Activated B cell treated with CpG ODN at 0.5 μM for 24 hours (primary cell): ENCODE measurements at regions of chr13 and their contacts with region 1.

Region 1: DNA sequence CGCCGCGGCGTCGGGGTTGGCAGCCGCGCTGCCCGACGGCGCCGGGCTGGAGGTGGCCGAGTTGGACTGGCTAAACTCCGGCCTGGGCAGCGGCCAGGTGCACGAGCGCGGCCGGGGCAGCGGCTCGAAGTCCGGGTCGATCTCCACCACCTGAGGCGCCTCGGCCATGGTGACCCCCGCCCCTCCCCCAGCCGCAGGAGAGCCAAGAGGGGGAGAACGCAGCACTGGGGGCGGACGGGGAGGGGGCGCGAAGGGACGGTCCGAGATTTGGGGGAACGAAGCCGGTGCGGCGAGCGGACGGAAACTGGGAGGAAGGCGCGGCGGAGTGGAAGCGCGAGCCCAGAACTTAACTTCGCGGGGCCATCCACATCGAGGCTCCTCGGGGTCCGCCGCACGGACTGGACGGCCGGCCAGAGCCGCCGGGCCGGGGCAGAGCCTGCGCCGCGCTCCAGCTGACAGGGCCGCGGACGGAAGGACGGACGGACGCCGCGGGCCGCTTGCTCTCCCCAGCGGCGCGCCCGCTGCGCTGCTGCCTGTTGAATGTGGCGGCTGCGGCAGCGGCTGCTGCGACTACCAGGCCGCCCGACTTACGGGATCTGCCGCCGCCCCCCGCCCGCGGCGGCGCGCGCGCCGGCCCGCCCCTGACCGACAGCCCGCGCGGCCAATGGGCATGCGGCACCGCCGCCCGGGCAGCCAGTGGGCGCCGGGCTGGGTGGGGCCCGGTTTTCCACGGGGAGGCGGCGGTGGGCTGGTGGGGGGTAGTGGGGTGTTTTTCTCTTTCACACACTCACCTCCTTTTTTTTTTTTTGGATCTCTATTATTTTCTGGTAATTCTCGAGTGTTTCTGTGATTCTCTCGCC is at the start of gene FOXO1:
- DNase-seq: peak; percentile 94
- ATAC-seq: peak; percentile 69
- H3K4me3 Mint-ChIP-seq: peak within 1 kb of the TSS; percentile 93
- H3K27ac Mint-ChIP-seq: peak within 1 kb of the TSS; percentile 94
- H3K4me1 Mint-ChIP-seq: peaks cover 40% of the 10 kb centered on the region
- H3K27me3 Mint-ChIP-seq: no peaks in the 10 kb centered on the region
- CTCF ChIP-seq: no peak
- total RNA-seq, gene FOXO1: 47.5 and 50.4 TPM in 2 replicates

Region 2: DNA sequence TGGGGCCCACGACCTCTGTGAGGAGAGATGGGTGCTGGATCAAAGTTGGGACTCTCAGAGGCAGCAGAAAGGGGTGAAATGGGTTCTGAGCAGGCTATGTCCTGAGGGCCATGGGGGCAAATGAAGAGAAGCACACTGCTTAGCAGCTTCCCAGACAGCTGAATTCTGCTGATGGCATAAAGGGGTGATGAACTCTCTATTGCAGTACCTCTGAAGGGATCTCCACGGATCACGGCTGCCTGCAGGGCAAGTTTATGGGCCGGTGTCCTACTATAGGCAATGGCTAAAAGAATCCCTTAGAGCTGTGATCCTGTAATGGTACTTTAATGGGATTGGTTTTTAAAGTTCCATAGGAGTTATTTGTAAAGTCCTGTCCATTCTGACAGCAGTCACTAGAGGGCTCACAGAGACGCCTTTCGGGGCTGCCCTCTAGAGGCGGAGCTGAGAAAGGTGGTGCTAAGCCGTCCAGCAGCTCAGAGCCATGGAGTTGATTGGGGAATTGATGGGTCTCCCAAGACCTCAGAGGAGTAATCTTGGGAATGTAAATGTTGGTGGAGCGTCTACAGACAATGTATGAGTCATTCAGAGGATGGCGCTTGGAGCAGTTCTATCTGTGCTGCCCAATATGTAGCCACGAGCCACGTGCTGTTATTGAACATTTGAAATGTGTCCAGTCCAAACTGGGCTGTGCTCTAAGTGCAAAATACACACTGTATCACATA is 723.6 kb before region 1 on chr13:
- CTCF ChIA-PET with region 1: interaction called, 6 read pairs
- POLR2A ChIA-PET with region 1: no interaction called
- intact Hi-C with region 1: loop called (anchors 5 kb)
- DNase-seq: peak; percentile 44
- ATAC-seq: peak; percentile 100
- H3K4me3 Mint-ChIP-seq: no peak overlapping the region
- H3K27ac Mint-ChIP-seq: no peak overlapping the region
- H3K4me1 Mint-ChIP-seq: no peaks in the 10 kb centered on the region
- H3K27me3 Mint-ChIP-seq: peaks cover 1% of the 10 kb centered on the region
- CTCF ChIP-seq: peak; percentile 93

Region 3: GRCh38 chr13:40318366-40318765 is 347.9 kb before region 1 on chr13:
- CTCF ChIA-PET with region 1: no interaction called
- POLR2A ChIA-PET with region 1: no interaction called
- intact Hi-C with region 1: loop called (anchors 5 kb)
- DNase-seq: no peak
- ATAC-seq: no peak
- H3K4me3 Mint-ChIP-seq: no peak overlapping the region
- H3K27ac Mint-ChIP-seq: no peak overlapping the region
- H3K4me1 Mint-ChIP-seq: peaks cover 36% of the 10 kb centered on the region
- H3K27me3 Mint-ChIP-seq: no peaks in the 10 kb centered on the region
- CTCF ChIP-seq: no peak

Region 4: GRCh38 chr13:40433577-40433976 is 232.7 kb before region 1 on chr13:
- CTCF ChIA-PET with region 1: interaction called, 6 read pairs
- POLR2A ChIA-PET with region 1: interaction called, 51 read pairs
- intact Hi-C with region 1: no loop called
- DNase-seq: no peak
- ATAC-seq: peak; percentile 68
- H3K4me3 Mint-ChIP-seq: peak overlapping the region; percentile 60
- H3K27ac Mint-ChIP-seq: peak overlapping the region; percentile 89
- H3K4me1 Mint-ChIP-seq: peaks cover 92% of the 10 kb centered on the region
- H3K27me3 Mint-ChIP-seq: no peaks in the 10 kb centered on the region
- CTCF ChIP-seq: no peak

Region 5: GRCh38 chr13:40613192-40613818 is 53.0 kb before region 1 on chr13:
- CTCF ChIA-PET with region 1: no interaction called
- POLR2A ChIA-PET with region 1: interaction called, 13 read pairs
- intact Hi-C with region 1: loop called (anchors 2 kb)
- DNase-seq: no peak
- ATAC-seq: peak; percentile 90
- H3K4me3 Mint-ChIP-seq: peak overlapping the region; percentile 71
- H3K27ac Mint-ChIP-seq: peak overlapping the region; percentile 88
- H3K4me1 Mint-ChIP-seq: peaks cover 90% of the 10 kb centered on the region
- H3K27me3 Mint-ChIP-seq: no peaks in the 10 kb centered on the region
- CTCF ChIP-seq: no peak

Region 6: DNA sequence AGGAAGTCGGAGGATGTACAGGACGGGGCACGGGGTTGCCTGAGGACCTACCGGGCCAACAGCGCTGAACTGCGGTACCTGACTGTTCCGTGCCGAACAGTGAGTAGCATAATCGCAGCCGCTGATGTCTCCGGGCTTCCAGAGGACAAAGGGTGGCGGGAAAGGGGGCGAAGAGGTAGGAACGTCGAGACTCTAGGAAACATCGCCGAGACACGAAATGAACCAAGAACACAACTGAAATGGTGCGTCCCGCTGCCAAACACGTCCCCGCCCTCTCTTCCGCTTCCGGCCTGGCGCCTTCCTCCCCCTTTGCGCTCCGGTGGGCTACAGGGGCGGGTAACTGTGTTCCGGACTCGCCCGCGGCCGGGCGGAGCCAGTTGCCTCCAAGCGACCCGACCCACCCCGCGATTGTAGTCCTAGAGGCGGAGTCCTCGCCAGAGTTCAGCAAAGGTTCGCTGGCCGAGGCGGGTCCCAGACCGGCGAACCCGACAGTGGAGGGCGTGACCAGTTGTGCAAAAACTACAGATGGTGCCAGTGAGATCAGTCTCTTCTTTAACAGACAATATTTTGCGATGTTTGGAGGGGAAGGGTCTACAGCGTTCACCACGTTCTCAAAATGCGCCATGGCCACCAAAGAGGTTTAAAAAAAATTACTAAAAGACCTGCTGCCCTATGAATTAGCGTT is 104.8 kb after region 1 on chr13 and contains the start of gene MRPS31:
- CTCF ChIA-PET with region 1: no interaction called
- POLR2A ChIA-PET with region 1: no interaction called
- intact Hi-C with region 1: loop called (anchors 1 kb)
- DNase-seq: peak; percentile 94
- ATAC-seq: peak; percentile 100
- H3K4me3 Mint-ChIP-seq: peak within 1 kb of the TSS; percentile 98
- H3K27ac Mint-ChIP-seq: peak within 1 kb of the TSS; percentile 94
- H3K4me1 Mint-ChIP-seq: peaks cover 30% of the 10 kb centered on the region
- H3K27me3 Mint-ChIP-seq: no peaks in the 10 kb centered on the region
- CTCF ChIP-seq: no peak
- total RNA-seq, gene MRPS31: 29.4 and 30.5 TPM in 2 replicates